Left ventricle myocardium superior (tissue), 1 donor: ENCODE measurements at regions of chr17 and their contacts with region 1.

Region 1: DNA sequence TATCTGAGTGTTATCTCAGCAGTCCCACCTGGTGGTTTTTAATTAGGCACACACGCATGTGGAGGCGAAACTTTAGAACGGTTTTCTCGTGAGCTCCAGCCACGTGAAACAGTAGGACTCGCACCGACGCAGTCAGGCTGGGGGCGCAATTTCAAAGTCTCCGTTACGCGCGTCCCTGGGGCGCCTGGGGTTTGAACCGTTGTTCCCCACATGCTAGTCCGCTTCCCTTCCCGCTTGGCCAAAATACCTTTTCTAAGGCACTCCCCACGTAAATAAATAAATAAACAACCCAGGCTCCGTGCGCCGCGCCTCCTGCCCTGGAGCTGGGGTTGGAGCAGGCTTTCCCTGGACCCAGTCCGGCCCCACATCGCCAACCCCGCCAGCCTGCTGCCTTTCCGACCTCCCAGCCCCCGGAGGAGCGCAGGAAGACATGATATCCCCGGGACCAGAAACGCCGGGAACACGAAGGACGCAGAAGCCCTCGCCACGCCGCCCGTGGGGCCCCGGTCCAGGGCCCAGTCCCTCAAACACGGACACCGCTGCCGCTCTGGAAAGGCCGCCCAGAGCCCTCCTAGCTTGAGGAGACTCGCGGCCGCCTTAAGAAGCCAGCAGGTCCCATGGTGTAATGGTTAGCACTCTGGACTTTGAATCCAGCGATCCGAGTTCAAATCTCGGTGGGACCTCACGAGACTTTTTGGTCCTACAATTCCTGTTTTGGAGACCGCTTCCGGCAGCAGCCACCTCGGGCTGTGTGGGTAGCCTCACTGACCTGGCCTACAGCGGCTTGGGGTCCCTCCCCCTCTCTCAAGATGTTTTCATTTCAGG is 18.2 kb downstream of the GNGT2 start:
- DNase-seq: peak; percentile 91
- ATAC-seq: peak; percentile 92

Region 2: GRCh38 chr17:49227436-49228261 is 35.5 kb after region 1 on chr17:
- intact Hi-C with region 1: loop called (anchors 5 kb)
- DNase-seq: peak; percentile 82
- ATAC-seq: peak; percentile 47

Region 3: DNA sequence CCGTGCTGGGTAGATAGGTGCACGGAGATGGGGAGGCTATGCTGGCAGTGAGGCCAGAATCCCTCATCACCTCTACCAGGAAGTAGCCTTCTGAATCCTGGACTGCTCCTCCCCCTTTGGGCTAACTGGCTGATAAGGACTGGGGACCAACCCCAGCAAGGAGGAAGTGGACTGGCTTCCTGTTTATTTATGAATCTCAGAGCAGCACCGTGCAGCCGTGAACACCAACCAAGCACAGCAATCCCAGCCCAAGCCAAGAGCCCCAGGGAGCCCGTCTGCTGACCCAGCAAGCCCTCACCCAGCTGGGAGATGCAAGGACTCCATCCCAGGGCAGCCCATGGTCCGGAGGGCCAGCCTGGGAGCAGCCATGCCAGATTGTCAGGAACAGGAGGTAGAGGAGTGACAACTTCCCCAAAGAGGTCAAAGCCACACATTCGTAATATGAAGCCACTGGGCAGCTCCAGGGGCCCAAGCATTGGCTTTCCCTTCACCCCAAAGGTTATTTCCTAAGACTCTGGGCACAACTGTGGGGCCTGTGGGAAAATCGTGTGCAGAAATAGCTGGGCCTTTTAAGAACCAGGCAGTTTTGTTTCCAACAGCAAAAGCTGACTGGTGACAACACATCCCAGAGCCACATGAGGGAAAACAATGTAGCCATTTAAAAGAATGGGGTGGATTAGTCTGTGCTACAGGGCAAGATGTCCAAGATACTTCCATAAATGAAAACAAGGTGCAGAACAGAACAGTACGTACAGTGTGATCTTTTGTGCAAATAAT is 198.6 kb after region 1 on chr17:
- intact Hi-C with region 1: no loop called
- DNase-seq: peak; percentile 42
- ATAC-seq: peak; percentile 53